HepG2 (cell line): ENCODE measurements at regions of chr3 and their contacts with region 1.

Region 1: GRCh38 chr3:17233398-17233800 is 348.6 kb downstream of the PLCL2 start:
- DNase-seq: peak; percentile 66
- ATAC-seq: peak; percentile 93
- H3K4me3 ChIP-seq: no peak overlapping the region
- H3K27ac ChIP-seq: no peak overlapping the region
- H3K4me1 ChIP-seq: peaks cover 26% of the 10 kb centered on the region
- H3K27me3 ChIP-seq: no peaks in the 10 kb centered on the region
- CTCF ChIP-seq: peak; percentile 80
- EP300 ChIP-seq: no peak
- POLR2A ChIP-seq: no peak
- RAD21 ChIP-seq: peak; percentile 62

Region 2: DNA sequence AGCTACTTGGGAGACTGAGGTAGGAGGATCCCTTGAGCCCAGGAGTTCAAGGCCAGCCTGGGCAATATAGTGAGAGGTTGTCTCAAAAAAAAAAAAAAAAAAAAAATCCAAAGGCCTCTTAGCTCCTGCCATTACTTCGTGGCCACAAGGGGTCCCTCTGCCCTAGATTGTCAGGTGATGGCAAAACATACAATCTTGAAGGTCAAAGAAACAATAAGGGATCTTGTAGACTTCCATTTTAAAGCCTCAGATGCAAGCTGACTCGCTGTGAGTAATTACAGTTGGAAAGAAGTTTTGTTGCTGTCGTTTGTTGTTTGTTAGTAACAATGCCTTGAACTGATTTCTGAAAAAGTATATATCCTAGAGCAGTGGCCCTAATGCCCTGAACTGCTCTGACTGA is 404.6 kb before region 1 on chr3:
- CTCF ChIA-PET with region 1: no interaction called
- POLR2A ChIA-PET with region 1: no interaction called
- in situ Hi-C with region 1: no loop called
- intact Hi-C with region 1: loop called (anchors 2 kb)
- DNase-seq: no peak
- ATAC-seq: no peak
- H3K4me3 ChIP-seq: no peak overlapping the region
- H3K27ac ChIP-seq: no peak overlapping the region
- H3K4me1 ChIP-seq: no peaks in the 10 kb centered on the region
- H3K27me3 ChIP-seq: no peaks in the 10 kb centered on the region
- CTCF ChIP-seq: no peak
- EP300 ChIP-seq: no peak
- POLR2A ChIP-seq: no peak
- RAD21 ChIP-seq: no peak

Region 3: GRCh38 chr3:16917256-16917935 is 316.0 kb before region 1 on chr3:
- CTCF ChIA-PET with region 1: no interaction called
- POLR2A ChIA-PET with region 1: no interaction called
- in situ Hi-C with region 1: no loop called
- intact Hi-C with region 1: loop called (anchors 5 kb)
- DNase-seq: no peak
- ATAC-seq: no peak
- H3K4me3 ChIP-seq: no peak overlapping the region
- H3K27ac ChIP-seq: no peak overlapping the region
- H3K4me1 ChIP-seq: no peaks in the 10 kb centered on the region
- H3K27me3 ChIP-seq: no peaks in the 10 kb centered on the region
- CTCF ChIP-seq: no peak
- EP300 ChIP-seq: no peak
- POLR2A ChIP-seq: no peak
- RAD21 ChIP-seq: no peak

Region 4: GRCh38 chr3:17032407-17033034 is 200.9 kb before region 1 on chr3:
- CTCF ChIA-PET with region 1: no interaction called
- POLR2A ChIA-PET with region 1: no interaction called
- in situ Hi-C with region 1: no loop called
- intact Hi-C with region 1: loop called (anchors 5 kb)
- DNase-seq: peak; percentile 16
- ATAC-seq: peak; percentile 91
- H3K4me3 ChIP-seq: no peak overlapping the region
- H3K27ac ChIP-seq: no peak overlapping the region
- H3K4me1 ChIP-seq: no peaks in the 10 kb centered on the region
- H3K27me3 ChIP-seq: peaks cover 1 to 3% of the 10 kb centered on the region in 2 experiments; a peak in 2 of 5 replicates
- CTCF ChIP-seq: peak; percentile 49
- EP300 ChIP-seq: no peak
- POLR2A ChIP-seq: no peak
- RAD21 ChIP-seq: no peak